GM10248 (cell line): ENCODE measurements at regions of chr16 and their contacts with region 1.

Region 1: GRCh38 chr16:85935974-85936760 is 37.2 kb downstream of the IRF8 start:
- DNase-seq: peak; percentile 82
- CTCF ChIP-seq: no peak

Region 2: DNA sequence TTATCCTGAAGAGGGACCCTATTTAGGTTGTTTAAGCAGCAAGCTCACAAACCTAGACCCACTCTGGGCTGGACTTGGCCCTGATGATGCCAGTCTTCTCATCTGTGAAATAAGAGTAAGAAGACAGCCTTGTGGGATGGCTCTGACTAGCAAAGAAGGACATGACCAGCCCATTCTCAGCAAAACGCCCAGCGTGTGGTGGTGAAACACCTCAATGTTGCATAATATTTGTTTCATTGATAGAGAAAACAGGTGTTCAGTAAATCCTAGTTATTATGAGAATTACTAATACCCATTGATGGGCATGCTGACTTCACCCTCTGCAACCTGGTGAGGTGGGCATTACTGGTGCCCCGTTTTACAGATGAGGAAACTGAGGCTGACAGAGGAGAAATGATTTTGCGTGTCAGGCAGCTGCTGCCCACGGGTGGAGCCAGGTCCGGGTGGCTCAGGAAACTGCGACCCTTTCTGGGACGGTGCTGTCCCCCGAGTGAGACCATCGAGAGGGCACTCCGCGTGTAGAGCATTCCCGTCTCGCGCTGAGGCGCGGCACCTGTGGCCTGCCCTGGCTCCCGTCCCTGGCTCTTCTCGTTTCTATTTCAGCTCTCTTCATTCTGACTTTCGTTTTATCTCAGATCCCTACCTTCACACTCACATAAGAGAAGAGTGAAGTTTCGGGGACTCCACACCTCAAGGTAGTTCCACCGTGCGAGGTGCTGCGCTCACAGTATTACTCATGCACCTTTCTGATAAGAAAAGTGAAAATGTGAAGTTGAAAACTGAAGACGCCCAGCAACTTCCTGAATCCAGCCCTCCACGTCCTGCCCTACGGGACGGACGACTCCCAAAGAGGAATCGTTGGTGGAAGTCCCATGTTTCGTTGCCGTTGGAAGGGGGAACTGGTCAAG is 11.3 kb after region 1 on chr16:
- CTCF ChIA-PET with region 1: interaction called, 19 read pairs
- POLR2A ChIA-PET with region 1: interaction called, 3 read pairs
- DNase-seq: peak; percentile 85
- CTCF ChIP-seq: no peak